ENCODE measurements at regions of chr3 and their contacts with region 1.

Region 1: DNA sequence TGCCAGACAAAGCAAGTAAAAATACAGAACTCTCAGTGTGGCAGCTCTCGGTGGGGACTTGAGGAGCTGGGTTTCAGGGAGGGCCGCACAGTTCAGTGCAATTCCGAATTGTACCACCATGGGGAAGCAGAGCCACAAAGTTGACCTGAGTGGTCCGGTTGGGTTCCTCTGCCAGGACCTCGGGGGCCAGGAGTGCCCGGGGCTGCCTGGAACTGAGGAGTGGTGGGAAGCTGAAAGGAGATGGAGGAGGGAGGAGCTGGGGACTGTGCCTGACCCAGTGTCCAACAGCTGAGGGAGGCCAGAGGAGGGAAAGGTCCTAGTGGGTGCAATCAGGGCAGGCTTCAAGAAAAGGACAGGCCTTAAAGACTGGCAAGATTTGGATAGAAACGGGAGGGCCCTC is 32.2 kb upstream of the TRH start:
- DNase-seq: peak; percentile 60 to 64
- H3K4me3 ChIP-seq: no peak overlapping the region
- H3K27ac ChIP-seq: no peak overlapping the region
- H3K4me1 ChIP-seq: no peaks in the 10 kb centered on the region
- H3K27me3 ChIP-seq: no peaks in the 10 kb centered on the region
- CTCF ChIP-seq: peak; percentile 34 to 79 (median 66)
- POLR2A ChIP-seq: no peak

Region 2: GRCh38 chr3:129777806-129778205 is 164.5 kb before region 1 on chr3:
- intact Hi-C with region 1: no loop called
- DNase-seq: no peak
- H3K4me3 ChIP-seq: no peak overlapping the region
- H3K27ac ChIP-seq: no peak overlapping the region
- H3K4me1 ChIP-seq: peaks cover 16 to 18% of the 10 kb centered on the region in 2 donors
- H3K27me3 ChIP-seq: no peaks in the 10 kb centered on the region
- CTCF ChIP-seq: no peak
- POLR2A ChIP-seq: no peak

Region 3: DNA sequence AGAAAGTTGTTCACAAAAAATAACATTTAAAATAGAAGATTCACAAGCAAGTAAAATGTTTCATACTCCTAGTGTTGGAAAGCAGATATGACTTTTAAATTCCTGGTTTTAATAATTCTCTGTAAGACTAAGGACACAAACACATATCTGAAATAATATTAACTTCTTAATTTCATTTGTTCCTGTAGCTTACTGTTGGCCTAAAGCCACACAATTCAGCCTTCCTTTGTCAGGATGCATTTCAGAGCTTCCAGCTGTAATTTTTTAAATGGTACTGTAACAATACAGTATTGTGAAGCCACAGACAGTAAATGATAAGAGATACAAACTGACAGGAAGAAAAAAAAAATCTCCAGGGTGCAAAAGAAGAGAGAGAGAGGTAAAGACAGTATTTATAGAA is 133.0 kb before region 1 on chr3:
- intact Hi-C with region 1: no loop called
- DNase-seq: no peak
- H3K4me3 ChIP-seq: no peak overlapping the region
- H3K27ac ChIP-seq: no peak overlapping the region
- H3K4me1 ChIP-seq: no peaks in the 10 kb centered on the region
- H3K27me3 ChIP-seq: no peaks in the 10 kb centered on the region
- CTCF ChIP-seq: no peak
- POLR2A ChIP-seq: no peak

Region 4: GRCh38 chr3:130093741-130094391 is 151.6 kb after region 1 on chr3:
- intact Hi-C with region 1: loop called (anchors 10 kb)
- DNase-seq: no peak
- H3K4me3 ChIP-seq: no peak overlapping the region
- H3K27ac ChIP-seq: no peak overlapping the region
- H3K4me1 ChIP-seq: no peaks in the 10 kb centered on the region
- H3K27me3 ChIP-seq: no peaks in the 10 kb centered on the region
- CTCF ChIP-seq: no peak
- POLR2A ChIP-seq: no peak

Region 5: DNA sequence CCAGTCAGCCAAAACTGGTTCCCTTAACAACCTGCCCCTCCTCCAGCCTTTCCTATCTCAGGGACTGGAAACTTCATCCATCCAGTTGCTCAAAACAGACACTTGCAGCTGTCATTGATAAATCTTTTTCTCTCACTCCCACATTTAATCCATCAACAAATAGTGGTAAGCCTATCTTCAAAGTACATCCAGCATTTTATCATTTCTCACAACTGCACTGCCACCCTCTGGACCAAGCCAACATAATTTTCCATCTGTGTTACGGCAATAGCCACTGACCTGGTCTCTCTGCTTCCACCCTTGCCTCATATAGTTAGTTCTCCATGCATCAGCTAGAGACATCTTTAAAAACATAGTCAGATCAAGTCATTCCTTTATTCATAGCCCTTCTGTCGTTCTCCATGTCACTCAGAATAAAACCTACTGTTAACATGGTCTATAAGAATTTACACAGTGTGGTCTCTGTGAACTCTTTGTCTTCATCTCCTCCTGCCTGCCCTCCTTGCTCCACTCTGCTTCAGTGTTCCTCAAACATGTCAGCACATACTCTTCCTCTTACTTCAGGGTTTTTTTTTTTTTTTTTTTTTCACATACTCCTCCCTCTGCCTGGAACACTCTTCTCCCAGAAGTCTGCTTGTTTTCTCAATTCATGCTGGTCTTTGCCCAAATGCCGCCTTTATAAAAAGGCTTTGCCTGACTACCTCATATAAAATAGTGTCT is 300.7 kb after region 1 on chr3:
- intact Hi-C with region 1: no loop called
- DNase-seq: peak; percentile 12 to 14
- H3K4me3 ChIP-seq: no peak overlapping the region
- H3K27ac ChIP-seq: no peak overlapping the region
- H3K4me1 ChIP-seq: no peaks in the 10 kb centered on the region
- H3K27me3 ChIP-seq: no peaks in the 10 kb centered on the region
- CTCF ChIP-seq: peak in 3 of 6 experiments; percentile 29 to 55 (median 39)
- POLR2A ChIP-seq: no peak

Region 6: DNA sequence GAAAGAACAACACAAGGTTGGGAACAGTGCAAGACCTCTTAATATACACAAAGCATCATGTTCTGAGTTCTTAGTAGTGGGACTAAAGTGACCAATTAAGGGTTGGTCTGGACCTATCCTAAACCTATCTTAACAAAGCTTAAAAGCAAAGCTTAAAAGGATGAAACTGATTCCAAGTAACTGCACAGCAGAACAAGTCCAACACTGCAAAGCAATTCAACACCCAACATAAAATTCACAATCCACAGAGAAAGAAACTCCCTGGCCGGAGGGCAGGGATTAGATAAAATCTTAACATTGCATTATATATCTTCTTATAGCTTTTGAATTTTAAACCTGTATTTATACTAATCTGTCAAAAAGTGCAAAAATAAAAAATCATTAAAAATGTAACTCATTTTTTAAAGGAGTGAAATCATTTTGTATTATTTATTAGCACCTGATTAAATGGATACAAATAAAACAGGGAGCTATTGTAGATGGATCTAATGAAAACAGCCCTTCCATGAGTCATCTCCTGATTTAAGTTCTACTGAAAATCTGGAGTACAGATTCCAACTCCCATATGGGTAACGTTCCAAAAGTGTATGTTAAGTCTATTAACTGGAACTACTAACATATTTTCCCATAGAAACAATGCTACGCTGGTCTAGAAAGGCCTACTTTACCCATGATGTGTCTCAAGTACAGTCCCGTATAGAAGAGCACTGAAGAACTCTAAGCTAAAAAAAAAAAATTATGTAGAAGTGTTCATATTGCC is 769.4 kb after region 1 on chr3:
- intact Hi-C with region 1: no loop called
- DNase-seq: no peak
- H3K4me3 ChIP-seq: no peak overlapping the region
- H3K27ac ChIP-seq: peak overlapping the region in 1 of 3 donors; percentile 1
- H3K4me1 ChIP-seq: peaks cover 0 to 11% of the 10 kb centered on the region in 2 donors
- H3K27me3 ChIP-seq: no peaks in the 10 kb centered on the region
- CTCF ChIP-seq: no peak
- POLR2A ChIP-seq: no peak